H1 (cell line): ENCODE measurements at regions of chr14 and their contacts with region 1.

Region 1: GRCh38 chr14:76564471-76565422 is 188.8 kb downstream of the ESRRB start:
- DNase-seq: no peak
- H3K4me3 ChIP-seq: no peak overlapping the region
- H3K27ac ChIP-seq: no peak overlapping the region
- H3K4me1 ChIP-seq: peaks cover 0 to 2% (median 0%) of the 10 kb centered on the region in 4 experiments; a peak in 1 of 7 replicates
- H3K27me3 ChIP-seq: no peaks in the 10 kb centered on the region
- CTCF ChIP-seq: peak; percentile 16 to 51 (median 42)
- EP300 ChIP-seq: no peak
- POLR2A ChIP-seq: no peak
- RAD21 ChIP-seq: peak; percentile 20 to 38; a peak in 2 of 4 replicates

Region 2: GRCh38 chr14:76473481-76474263 is 91.1 kb before region 1 on chr14:
- CTCF ChIA-PET with region 1: interaction called, 11 read pairs
- POLR2A ChIA-PET with region 1: interaction called, 3 read pairs
- DNase-seq: peak in 1 of 2 experiments; percentile 56
- H3K4me3 ChIP-seq: no peak overlapping the region
- H3K27ac ChIP-seq: no peak overlapping the region
- H3K4me1 ChIP-seq: no peaks in the 10 kb centered on the region; a peak in 1 of 7 replicates
- H3K27me3 ChIP-seq: no peaks in the 10 kb centered on the region
- CTCF ChIP-seq: peak; percentile 51 to 57 (median 57)
- EP300 ChIP-seq: no peak
- POLR2A ChIP-seq: no peak
- RAD21 ChIP-seq: peak; percentile 40 to 57

Region 3: GRCh38 chr14:76550534-76550933 is 14.2 kb before region 1 on chr14:
- CTCF ChIA-PET with region 1: interaction called, 24 read pairs
- POLR2A ChIA-PET with region 1: interaction called, 3 read pairs
- DNase-seq: no peak
- H3K4me3 ChIP-seq: no peak overlapping the region
- H3K27ac ChIP-seq: no peak overlapping the region
- H3K4me1 ChIP-seq: peaks cover 0 to 7% (median 2%) of the 10 kb centered on the region in 4 experiments; a peak in 3 of 7 replicates
- H3K27me3 ChIP-seq: no peaks in the 10 kb centered on the region
- CTCF ChIP-seq: no peak
- EP300 ChIP-seq: no peak
- POLR2A ChIP-seq: no peak
- RAD21 ChIP-seq: no peak

Region 4: GRCh38 chr14:76576047-76576741 is 11.4 kb after region 1 on chr14:
- CTCF ChIA-PET with region 1: interaction called, 12 read pairs
- POLR2A ChIA-PET with region 1: no interaction called
- DNase-seq: no peak
- H3K4me3 ChIP-seq: no peak overlapping the region
- H3K27ac ChIP-seq: no peak overlapping the region
- H3K4me1 ChIP-seq: no peaks in the 10 kb centered on the region
- H3K27me3 ChIP-seq: no peaks in the 10 kb centered on the region
- CTCF ChIP-seq: no peak
- EP300 ChIP-seq: no peak
- POLR2A ChIP-seq: no peak
- RAD21 ChIP-seq: no peak

Region 5: DNA sequence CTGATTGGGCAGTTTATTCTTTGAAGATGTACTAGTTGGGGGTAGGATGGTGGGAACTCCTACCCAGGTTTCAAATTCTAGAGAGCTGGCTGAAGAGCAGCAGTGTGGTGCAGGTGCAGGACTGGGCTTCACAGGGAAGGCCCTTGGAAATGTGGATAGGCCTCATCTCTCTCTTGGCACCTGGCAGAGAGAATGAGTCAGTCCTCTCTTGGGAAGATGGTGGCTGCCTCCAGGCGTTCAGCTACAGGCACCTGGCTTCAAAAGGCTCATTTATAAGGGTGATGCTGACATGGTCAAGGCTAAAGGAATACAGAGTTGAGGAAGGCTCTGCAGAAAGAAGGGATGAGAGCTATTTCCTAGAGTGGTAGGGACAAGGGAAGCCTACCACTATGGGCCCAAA is 16.8 kb after region 1 on chr14:
- CTCF ChIA-PET with region 1: interaction called, 12 read pairs
- POLR2A ChIA-PET with region 1: no interaction called
- DNase-seq: no peak
- H3K4me3 ChIP-seq: no peak overlapping the region
- H3K27ac ChIP-seq: no peak overlapping the region
- H3K4me1 ChIP-seq: no peaks in the 10 kb centered on the region
- H3K27me3 ChIP-seq: no peaks in the 10 kb centered on the region
- CTCF ChIP-seq: no peak
- EP300 ChIP-seq: no peak
- POLR2A ChIP-seq: no peak
- RAD21 ChIP-seq: no peak

Region 6: DNA sequence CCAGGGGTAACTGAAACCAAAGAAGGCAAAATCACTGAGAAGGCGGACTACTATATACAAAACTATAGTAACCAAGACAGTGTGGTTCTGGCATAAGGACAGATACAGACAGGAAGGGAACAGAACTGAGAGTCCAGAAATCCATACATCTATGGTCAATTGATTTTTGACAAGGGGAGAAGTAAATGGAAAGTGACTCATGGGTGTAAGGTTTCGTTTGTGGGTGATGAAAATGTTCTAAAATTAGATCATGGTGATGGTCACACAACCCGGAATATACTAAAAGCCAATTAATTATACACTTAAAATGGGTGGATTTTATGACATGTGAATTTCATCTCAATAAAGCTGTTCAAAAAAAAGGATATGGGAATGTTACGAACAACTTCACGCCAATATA is 229.2 kb after region 1 on chr14:
- CTCF ChIA-PET with region 1: no interaction called
- POLR2A ChIA-PET with region 1: no interaction called
- DNase-seq: no peak
- H3K4me3 ChIP-seq: no peak overlapping the region
- H3K27ac ChIP-seq: no peak overlapping the region
- H3K4me1 ChIP-seq: no peaks in the 10 kb centered on the region
- H3K27me3 ChIP-seq: no peaks in the 10 kb centered on the region
- CTCF ChIP-seq: no peak
- EP300 ChIP-seq: no peak
- POLR2A ChIP-seq: no peak
- RAD21 ChIP-seq: no peak

Region 7: GRCh38 chr14:76812211-76813044 is 247.7 kb after region 1 on chr14 and contains the start of gene ANGEL1:
- CTCF ChIA-PET with region 1: no interaction called
- POLR2A ChIA-PET with region 1: no interaction called
- DNase-seq: peak; percentile 82 to 97
- H3K4me3 ChIP-seq: peak within 1 kb of the TSS; percentile 74 to 82 (median 80)
- H3K27ac ChIP-seq: peak within 1 kb of the TSS; percentile 76
- H3K4me1 ChIP-seq: peaks cover 2 to 9% (median 3%) of the 10 kb centered on the region in 4 experiments; a peak in 3 of 7 replicates
- H3K27me3 ChIP-seq: no peaks in the 10 kb centered on the region; a peak in 2 of 7 replicates
- CTCF ChIP-seq: no peak
- EP300 ChIP-seq: peak; percentile 6 to 88; a peak in 2 of 3 replicates
- POLR2A ChIP-seq: peak; percentile 76 to 90
- RAD21 ChIP-seq: no peak
- total RNA-seq, gene ANGEL1: 23.1 and 26.8 TPM in 2 replicates